Naive thymus-derived CD4-positive, alpha-beta T cell (primary cell): ENCODE measurements at regions of chr12 and their contacts with region 1.

Region 1: DNA sequence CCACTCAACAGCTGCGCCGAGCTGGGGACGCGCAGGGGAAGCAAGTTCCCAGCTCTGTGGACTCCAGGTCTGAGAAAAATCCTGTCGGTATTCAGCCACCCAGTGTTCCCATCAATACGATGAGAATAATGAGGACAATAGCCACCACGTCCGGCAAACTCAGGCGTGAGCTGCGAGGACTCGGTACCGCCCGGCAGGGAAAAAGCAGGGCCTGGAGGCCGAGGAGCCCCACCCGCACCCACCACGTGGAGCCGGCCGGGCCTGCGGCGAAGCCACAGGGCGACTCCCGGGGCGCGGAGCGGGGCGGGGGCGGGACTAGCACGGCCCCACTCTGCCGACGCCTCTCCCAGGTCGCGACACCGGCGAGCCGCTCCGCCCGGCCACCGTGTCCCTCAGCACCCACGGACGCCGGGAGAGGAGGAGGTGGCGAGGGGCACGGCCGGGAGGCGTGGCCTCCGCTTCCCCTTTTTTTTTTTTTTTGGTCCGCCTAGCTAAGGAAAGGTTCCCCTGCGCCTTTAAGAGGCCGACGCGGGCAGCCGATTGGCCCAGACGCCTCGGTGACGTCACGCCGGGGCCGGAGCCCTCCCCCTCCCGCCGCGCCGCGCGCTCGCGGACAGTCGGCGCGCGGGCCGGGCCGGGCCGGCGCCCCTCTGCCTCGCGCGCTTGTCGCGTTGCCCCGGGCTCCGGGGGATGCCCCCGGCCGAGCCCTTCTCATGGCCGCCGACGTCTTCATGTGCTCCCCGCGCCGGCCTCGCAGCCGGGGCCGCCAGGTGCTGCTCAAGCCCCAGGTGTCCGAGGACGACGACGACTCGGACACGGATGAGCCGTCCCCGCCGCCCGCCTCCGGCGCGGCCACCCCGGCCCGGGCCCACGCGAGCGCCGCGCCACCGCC is at the start of gene MLXIP:
- DNase-seq: peak; percentile 77 to 95 (median 85)
- ATAC-seq: peak; percentile 91
- H3K4me3 ChIP-seq: peak within 1 kb of the TSS; percentile 66
- H3K4me3 Mint-ChIP-seq: peak within 1 kb of the TSS; percentile 85 to 100 (median 98)
- H3K27ac ChIP-seq: peak within 1 kb of the TSS; percentile 82
- H3K27ac Mint-ChIP-seq: peak within 1 kb of the TSS; percentile 82 to 99 (median 88)
- H3K4me1 ChIP-seq: peaks cover 22 to 32% of the 10 kb centered on the region in 2 donors
- H3K4me1 Mint-ChIP-seq: peaks cover 7 to 45% (median 28%) of the 10 kb centered on the region in 7 donors
- H3K27me3 ChIP-seq: no peaks in the 10 kb centered on the region
- H3K27me3 Mint-ChIP-seq: no peaks in the 10 kb centered on the region
- total RNA-seq, gene MLXIP: 57.0 to 123 (median 115) TPM

Region 2: GRCh38 chr12:121917979-121918678 is 160.3 kb before region 1 on chr12 and contains the start of gene CFAP251:
- CTCF ChIA-PET with region 1: no interaction called
- POLR2A ChIA-PET with region 1: no interaction called
- intact Hi-C with region 1: loop called in 1 of 2 experiments (anchors 2 kb)
- DNase-seq: peak; percentile 88 to 98 (median 94)
- ATAC-seq: peak; percentile 99
- H3K4me3 ChIP-seq: peak within 1 kb of the TSS; percentile 58
- H3K4me3 Mint-ChIP-seq: peak within 1 kb of the TSS; percentile 68 to 94 (median 86)
- H3K27ac ChIP-seq: peak within 1 kb of the TSS; percentile 71
- H3K27ac Mint-ChIP-seq: peak within 1 kb of the TSS; percentile 91 to 98 (median 93)
- H3K4me1 ChIP-seq: peaks cover 4 to 10% of the 10 kb centered on the region in 2 donors
- H3K4me1 Mint-ChIP-seq: peaks cover 8 to 19% (median 13%) of the 10 kb centered on the region in 7 donors
- H3K27me3 ChIP-seq: no peaks in the 10 kb centered on the region
- H3K27me3 Mint-ChIP-seq: no peaks in the 10 kb centered on the region
- total RNA-seq, gene CFAP251: 0.38 to 1.5 (median 0.88) TPM

Region 3: DNA sequence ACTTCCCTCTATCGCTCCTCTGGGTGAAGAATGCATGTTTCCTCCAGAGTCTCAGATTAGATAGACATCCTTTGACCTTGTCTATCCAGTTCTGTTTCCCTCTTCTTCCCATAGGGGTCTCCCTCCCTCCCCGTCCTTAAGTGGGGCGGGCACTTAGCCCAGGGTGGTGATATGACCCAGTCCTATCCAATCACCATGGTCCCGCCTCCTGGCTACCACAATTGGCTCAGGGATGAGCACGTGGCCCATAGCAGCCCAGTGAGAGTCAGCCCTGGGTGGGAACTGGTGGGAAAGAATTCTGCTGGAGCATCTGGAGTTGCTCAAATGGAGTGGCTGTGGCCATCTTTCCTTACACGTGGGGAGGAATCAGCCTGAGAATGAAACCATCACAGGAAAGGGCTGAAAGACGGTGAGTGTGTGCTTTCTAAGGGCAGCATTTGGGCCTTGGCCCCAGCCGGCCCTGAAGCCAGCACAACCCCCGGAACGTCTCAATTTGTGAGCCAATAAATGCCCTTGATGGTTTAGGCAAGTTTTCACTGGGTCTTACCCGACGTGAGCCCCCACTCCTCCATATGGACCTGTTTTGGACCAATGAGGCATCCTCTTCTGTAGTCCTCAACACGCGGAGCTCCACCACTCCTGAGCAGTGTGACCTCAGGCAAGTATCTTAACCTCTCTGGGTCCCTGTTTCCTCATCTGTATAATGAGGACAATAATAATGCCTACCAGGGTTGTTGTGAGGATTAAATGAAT is 14.2 kb before region 1 on chr12:
- CTCF ChIA-PET with region 1: no interaction called
- POLR2A ChIA-PET with region 1: interaction called, 4 read pairs
- intact Hi-C with region 1: loop called in 1 of 2 experiments (anchors 1 kb)
- DNase-seq: peak in 4 of 9 donors; percentile 13 to 37 (median 29)
- ATAC-seq: peak; percentile 80
- H3K4me3 ChIP-seq: no peak overlapping the region
- H3K4me3 Mint-ChIP-seq: no peak overlapping the region
- H3K27ac ChIP-seq: no peak overlapping the region
- H3K27ac Mint-ChIP-seq: peak overlapping the region in 2 of 9 donors; percentile 18 to 83
- H3K4me1 ChIP-seq: peaks cover 11 to 12% of the 10 kb centered on the region in 2 donors
- H3K4me1 Mint-ChIP-seq: peaks cover 19 to 29% (median 24%) of the 10 kb centered on the region in 7 donors
- H3K27me3 ChIP-seq: no peaks in the 10 kb centered on the region
- H3K27me3 Mint-ChIP-seq: peaks cover 0 to 1% (median 0%) of the 10 kb centered on the region in 5 donors

Region 4: GRCh38 chr12:122097927-122098756 is 19.8 kb after region 1 on chr12:
- CTCF ChIA-PET with region 1: interaction called, 30 read pairs
- POLR2A ChIA-PET with region 1: interaction called, 150 read pairs
- intact Hi-C with region 1: loop called (anchors 1 kb)
- DNase-seq: no peak
- ATAC-seq: peak; percentile 28
- H3K4me3 ChIP-seq: no peak overlapping the region
- H3K4me3 Mint-ChIP-seq: peak overlapping the region in 9 of 10 donors; percentile 66 to 83 (median 76)
- H3K27ac ChIP-seq: peak overlapping the region; percentile 62
- H3K27ac Mint-ChIP-seq: peak overlapping the region in 7 of 9 donors; percentile 62 to 98 (median 94)
- H3K4me1 ChIP-seq: peaks cover 25 to 77% of the 10 kb centered on the region in 2 donors
- H3K4me1 Mint-ChIP-seq: peaks cover 49 to 73% (median 66%) of the 10 kb centered on the region in 7 donors
- H3K27me3 ChIP-seq: no peaks in the 10 kb centered on the region
- H3K27me3 Mint-ChIP-seq: no peaks in the 10 kb centered on the region

Region 5: GRCh38 chr12:122116707-122117535 is 38.5 kb after region 1 on chr12:
- CTCF ChIA-PET with region 1: interaction called, 6 read pairs
- POLR2A ChIA-PET with region 1: interaction called, 13 read pairs
- intact Hi-C with region 1: no loop called
- DNase-seq: no peak
- ATAC-seq: peak; percentile 42
- H3K4me3 ChIP-seq: no peak overlapping the region
- H3K4me3 Mint-ChIP-seq: no peak overlapping the region
- H3K27ac ChIP-seq: no peak overlapping the region
- H3K27ac Mint-ChIP-seq: peak overlapping the region in 6 of 9 donors; percentile 12 to 75 (median 45)
- H3K4me1 ChIP-seq: no peaks in the 10 kb centered on the region
- H3K4me1 Mint-ChIP-seq: peaks cover 17 to 40% (median 28%) of the 10 kb centered on the region in 7 donors
- H3K27me3 ChIP-seq: no peaks in the 10 kb centered on the region
- H3K27me3 Mint-ChIP-seq: no peaks in the 10 kb centered on the region

Region 6: DNA sequence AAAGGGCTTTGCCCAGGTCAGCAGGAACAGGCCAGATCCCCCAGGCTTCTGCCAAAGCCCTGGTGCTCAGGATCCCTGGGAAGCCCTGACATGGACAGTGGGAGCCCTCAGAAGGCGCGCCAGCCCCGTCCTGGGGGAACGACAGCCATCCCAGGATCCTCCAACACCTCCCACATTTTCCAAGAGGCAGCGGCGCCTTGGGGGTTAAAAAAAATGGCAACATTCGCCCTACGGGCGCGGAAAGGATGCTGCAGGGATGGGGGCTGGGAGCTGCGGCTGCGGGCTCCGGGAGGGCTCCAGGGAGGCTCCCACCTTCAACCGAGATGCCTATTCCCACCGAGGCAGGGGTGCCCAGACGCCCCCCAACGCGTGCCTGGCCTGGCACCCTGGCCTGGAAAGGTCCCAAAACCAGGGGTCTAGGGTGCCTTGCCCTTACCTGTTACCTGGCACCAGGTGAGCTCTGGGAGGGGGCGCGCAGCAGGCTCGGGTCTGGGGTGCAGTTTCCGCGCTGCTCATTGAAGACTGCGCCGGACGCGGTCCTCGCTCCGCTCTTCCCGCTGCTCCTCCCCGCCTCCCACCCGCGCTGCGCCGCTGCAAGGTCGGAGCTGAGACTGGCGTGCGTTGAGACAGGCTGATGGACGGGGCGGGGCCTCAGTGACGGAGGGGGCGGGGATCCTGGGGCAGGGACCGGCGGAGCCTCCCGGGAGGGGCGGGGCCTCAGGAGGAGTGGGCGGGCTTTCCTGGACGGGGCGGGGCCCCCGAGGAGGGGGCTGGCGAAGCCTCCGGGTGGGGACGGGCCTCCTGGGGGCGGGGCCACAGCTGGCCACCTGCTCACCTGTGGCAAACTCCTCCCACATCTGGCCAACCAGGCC is 887.7 kb after region 1 on chr12 and contains the start of gene ABCB9:
- CTCF ChIA-PET with region 1: no interaction called
- POLR2A ChIA-PET with region 1: no interaction called
- intact Hi-C with region 1: loop called in 1 of 2 experiments (anchors 10 kb)
- DNase-seq: peak; percentile 78 to 95 (median 85)
- ATAC-seq: peak; percentile 99
- H3K4me3 ChIP-seq: peak within 1 kb of the TSS; percentile 80
- H3K4me3 Mint-ChIP-seq: peak within 1 kb of the TSS; percentile 47 to 84 (median 76)
- H3K27ac ChIP-seq: peak within 1 kb of the TSS; percentile 67
- H3K27ac Mint-ChIP-seq: peak within 1 kb of the TSS in 8 of 9 donors; percentile 22 to 90 (median 70)
- H3K4me1 ChIP-seq: peaks cover 10 to 15% of the 10 kb centered on the region in 2 donors
- H3K4me1 Mint-ChIP-seq: peaks cover 5 to 20% (median 12%) of the 10 kb centered on the region in 7 donors
- H3K27me3 ChIP-seq: no peaks in the 10 kb centered on the region
- H3K27me3 Mint-ChIP-seq: no peaks in the 10 kb centered on the region
- total RNA-seq, gene ABCB9: 6.2 to 8.9 (median 7.1) TPM